ENCODE measurements at regions of chr9 and their contacts with region 1.

Region 1: GRCh38 chr9:134024828-134025605 is at the start of gene BRD3OS:
- DNase-seq: peak; percentile 97
- ATAC-seq: peak; percentile 98
- total RNA-seq, gene BRD3OS: 16.4 TPM

Region 2: GRCh38 chr9:134135343-134136118 is 110.5 kb after region 1 on chr9 and contains the start of gene WDR5:
- intact Hi-C with region 1: loop called (anchors 5 kb)
- DNase-seq: peak; percentile 95
- ATAC-seq: peak; percentile 90
- total RNA-seq, gene WDR5: 24.9 TPM

Measured in sciatic nerve (tissue), 2 donors.